ENCODE measurements at regions of chr2 and their contacts with region 1.

Region 1: GRCh38 chr2:61426267-61426897 is 44.5 kb downstream of the USP34 start:
- DNase-seq: peak; percentile 87
- ATAC-seq: peak; percentile 96
- H3K4me3 Mint-ChIP-seq: no peak overlapping the region
- H3K27ac Mint-ChIP-seq: peak overlapping the region; percentile 87
- H3K4me1 Mint-ChIP-seq: peaks cover 65% of the 10 kb centered on the region
- H3K27me3 Mint-ChIP-seq: no peaks in the 10 kb centered on the region

Region 2: DNA sequence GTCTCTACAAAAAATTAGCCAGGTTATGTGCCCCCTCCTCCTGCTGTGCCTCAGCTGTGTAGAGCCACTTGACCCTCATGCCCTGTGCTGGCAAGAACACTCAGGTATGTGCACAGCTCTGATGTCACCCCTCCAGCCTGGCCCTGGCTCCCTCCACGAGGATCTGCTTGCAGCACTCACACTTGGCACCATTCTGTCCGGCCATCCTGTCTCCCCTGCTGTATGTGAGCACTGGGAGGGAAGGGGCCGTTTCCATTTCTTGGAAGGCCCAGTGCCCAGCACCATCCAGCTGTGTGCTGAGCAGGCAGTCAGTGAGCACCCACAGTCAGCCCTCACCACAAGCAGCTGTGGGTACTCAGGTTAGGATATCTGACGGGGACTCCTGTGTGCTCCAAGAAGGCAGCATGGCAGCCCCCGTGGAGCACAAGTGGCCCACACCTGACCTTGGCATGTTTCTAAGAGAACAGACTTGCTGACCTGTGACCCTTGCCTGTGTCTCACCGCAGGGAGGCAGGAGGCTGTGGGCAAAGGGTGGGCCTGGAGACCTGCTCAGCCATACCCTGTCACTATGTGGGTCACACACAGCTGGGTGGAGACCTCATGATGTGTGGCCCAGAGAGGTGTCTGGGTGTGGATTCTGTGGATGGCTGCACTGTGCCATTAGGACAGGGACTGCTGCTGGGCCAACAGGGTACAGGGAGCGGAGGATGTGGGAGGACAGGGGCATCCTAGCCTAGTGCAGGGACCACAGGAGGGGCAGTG is 13.0 kb after region 1 on chr2:
- CTCF ChIA-PET with region 1: interaction called, 25 read pairs
- POLR2A ChIA-PET with region 1: no interaction called
- intact Hi-C with region 1: no loop called
- DNase-seq: no peak
- ATAC-seq: no peak
- H3K4me3 Mint-ChIP-seq: no peak overlapping the region
- H3K27ac Mint-ChIP-seq: no peak overlapping the region
- H3K4me1 Mint-ChIP-seq: peaks cover 70% of the 10 kb centered on the region
- H3K27me3 Mint-ChIP-seq: no peaks in the 10 kb centered on the region

Region 3: DNA sequence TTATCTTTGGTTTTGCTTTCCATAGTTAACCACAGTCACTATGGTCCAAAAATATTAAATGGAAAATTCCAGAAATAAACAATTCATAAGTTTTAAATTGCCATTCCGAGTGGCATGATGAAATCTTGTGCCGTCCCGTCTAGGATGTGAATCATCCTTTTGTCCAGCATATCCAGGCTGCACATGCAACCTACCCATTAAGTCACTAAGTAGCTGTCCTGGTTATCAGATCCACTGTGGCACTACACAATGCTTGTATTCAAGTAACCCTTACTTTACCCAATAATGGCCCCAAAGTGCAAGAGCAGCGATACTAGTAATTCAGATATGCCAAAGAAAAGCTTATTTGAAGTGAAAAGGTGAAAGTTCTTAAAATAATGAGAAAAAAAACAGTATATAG is 33.8 kb after region 1 on chr2:
- CTCF ChIA-PET with region 1: interaction called, 12 read pairs
- POLR2A ChIA-PET with region 1: interaction called, 6 read pairs
- intact Hi-C with region 1: no loop called
- DNase-seq: no peak
- ATAC-seq: no peak
- H3K4me3 Mint-ChIP-seq: no peak overlapping the region
- H3K27ac Mint-ChIP-seq: no peak overlapping the region
- H3K4me1 Mint-ChIP-seq: peaks cover 72% of the 10 kb centered on the region
- H3K27me3 Mint-ChIP-seq: no peaks in the 10 kb centered on the region

Region 4: GRCh38 chr2:61658841-61659780 is 232.7 kb after region 1 on chr2:
- CTCF ChIA-PET with region 1: no interaction called
- POLR2A ChIA-PET with region 1: no interaction called
- intact Hi-C with region 1: loop called (anchors 1 to 5 kb)
- DNase-seq: no peak
- ATAC-seq: peak; percentile 39
- H3K4me3 Mint-ChIP-seq: no peak overlapping the region
- H3K27ac Mint-ChIP-seq: no peak overlapping the region
- H3K4me1 Mint-ChIP-seq: peaks cover 4% of the 10 kb centered on the region
- H3K27me3 Mint-ChIP-seq: no peaks in the 10 kb centered on the region

Region 5: DNA sequence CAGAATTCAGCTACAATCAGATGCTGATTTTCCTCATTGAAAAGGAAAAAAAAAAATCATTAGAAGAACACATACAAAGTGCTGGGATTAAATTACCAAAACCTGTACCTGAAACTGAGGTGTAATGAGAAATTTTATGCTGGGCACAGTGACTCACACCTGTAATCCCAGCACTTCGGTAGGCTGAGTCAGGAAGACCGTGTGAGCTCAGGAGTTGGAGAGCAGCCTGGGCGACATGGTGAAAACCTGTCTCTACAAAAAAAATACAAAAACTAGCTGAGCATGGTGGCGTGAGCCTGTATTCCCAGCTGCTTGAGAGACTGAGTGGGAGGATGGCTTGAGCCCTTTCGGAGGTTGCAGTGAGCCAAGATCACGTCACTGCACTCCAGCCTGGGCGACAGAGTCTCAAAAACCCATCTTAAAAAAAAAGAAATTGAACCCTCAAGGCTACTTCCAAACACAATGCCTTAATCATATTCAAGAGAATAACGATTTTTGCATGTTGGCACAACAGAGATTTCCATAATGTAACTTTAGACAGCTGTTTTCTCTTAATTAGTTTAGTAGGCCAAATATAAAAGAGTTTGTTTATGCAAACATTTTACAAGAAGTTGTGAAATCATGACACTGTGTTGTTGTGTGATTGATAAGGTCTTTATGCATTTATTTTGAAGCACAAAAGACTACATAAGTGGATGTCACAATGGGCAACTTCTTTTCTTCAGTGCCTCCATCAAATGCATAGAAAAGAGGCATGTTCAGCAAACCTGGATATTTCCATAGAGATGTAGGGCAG is 363.6 kb after region 1 on chr2:
- CTCF ChIA-PET with region 1: interaction called, 4 read pairs
- POLR2A ChIA-PET with region 1: no interaction called
- intact Hi-C with region 1: loop called in 1 of 2 experiments (anchors 1 kb)
- DNase-seq: no peak
- ATAC-seq: no peak
- H3K4me3 Mint-ChIP-seq: no peak overlapping the region
- H3K27ac Mint-ChIP-seq: no peak overlapping the region
- H3K4me1 Mint-ChIP-seq: no peaks in the 10 kb centered on the region
- H3K27me3 Mint-ChIP-seq: peaks cover 3% of the 10 kb centered on the region

Measured in activated CD4-positive, alpha-beta T cell treated with anti-CD3 and anti-CD28 coated beads for 36 hours (primary cell).